Activated CD4-positive, alpha-beta memory T cell treated with anti-CD3 and anti-CD28 coated beads for 36 hours (primary cell): ENCODE measurements at regions of chr3 and their contacts with region 1.

Region 1: DNA sequence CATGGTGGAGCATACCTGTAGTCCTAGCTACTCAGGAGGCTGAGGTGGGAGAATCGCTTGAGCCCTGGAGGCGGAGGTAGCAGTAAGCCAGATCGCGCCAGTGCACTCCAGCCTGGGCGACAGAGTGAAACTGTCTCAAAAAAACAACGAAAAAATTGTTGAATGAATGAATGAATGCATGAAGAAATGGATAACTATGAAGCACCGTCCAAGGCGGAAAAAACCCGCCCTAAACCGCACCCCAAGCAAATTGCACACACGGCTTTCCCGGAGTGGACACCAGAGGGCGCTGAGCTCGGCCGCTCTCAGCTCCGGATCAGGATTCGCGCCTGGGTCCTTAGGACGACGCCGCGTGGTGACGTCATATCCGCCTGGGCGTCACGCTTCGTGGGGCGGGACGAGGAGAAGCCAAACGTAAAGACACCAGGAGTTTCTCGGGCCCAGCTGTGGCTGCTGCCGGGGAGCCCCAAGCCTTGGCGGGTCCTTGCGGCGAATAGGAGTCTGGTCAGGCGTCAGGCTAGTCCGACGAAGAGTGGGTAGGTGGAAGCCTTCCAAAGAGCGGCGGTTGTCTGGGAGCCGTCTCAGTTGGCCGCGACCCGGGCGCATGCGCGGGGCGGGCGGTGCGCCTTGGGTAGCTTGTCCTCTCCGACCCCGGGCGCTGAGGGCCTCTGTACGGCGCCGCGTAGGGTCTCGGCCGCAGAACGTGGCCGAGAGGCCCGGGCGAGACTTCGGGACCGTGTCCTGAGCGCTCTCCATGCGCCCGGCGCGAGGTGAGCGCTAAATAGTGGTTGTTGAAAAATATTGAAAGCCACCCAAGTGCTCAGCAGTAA is at the starts of genes HTD2 and RPP14:
- DNase-seq: peak; percentile 99
- H3K4me3 Mint-ChIP-seq: peak within 1 kb of the TSS; percentile 94
- H3K27ac Mint-ChIP-seq: peak within 1 kb of the TSS; percentile 98
- H3K4me1 Mint-ChIP-seq: peaks cover 32% of the 10 kb centered on the region
- H3K27me3 Mint-ChIP-seq: peaks cover 7% of the 10 kb centered on the region
- total RNA-seq, gene HTD2: 7.6 to 9.5 TPM
- total RNA-seq, gene RPP14: 14.0 to 15.4 TPM

Region 2: GRCh38 chr3:58177747-58178527 is 128.2 kb before region 1 on chr3:
- CTCF ChIA-PET with region 1: interaction called, 34 read pairs
- POLR2A ChIA-PET with region 1: no interaction called
- intact Hi-C with region 1: no loop called
- DNase-seq: peak; percentile 92
- H3K4me3 Mint-ChIP-seq: peak overlapping the region; percentile 39
- H3K27ac Mint-ChIP-seq: no peak overlapping the region
- H3K4me1 Mint-ChIP-seq: peaks cover 11% of the 10 kb centered on the region
- H3K27me3 Mint-ChIP-seq: no peaks in the 10 kb centered on the region

Region 3: GRCh38 chr3:58237238-58237940 is 68.7 kb before region 1 on chr3 and contains the start of gene ABHD6:
- CTCF ChIA-PET with region 1: interaction called, 14 read pairs
- POLR2A ChIA-PET with region 1: no interaction called
- intact Hi-C with region 1: loop called (anchors 1 kb)
- DNase-seq: peak; percentile 85
- H3K4me3 Mint-ChIP-seq: peak within 1 kb of the TSS; percentile 85
- H3K27ac Mint-ChIP-seq: peak within 1 kb of the TSS; percentile 62
- H3K4me1 Mint-ChIP-seq: peaks cover 8% of the 10 kb centered on the region
- H3K27me3 Mint-ChIP-seq: peaks cover 12% of the 10 kb centered on the region
- total RNA-seq, gene ABHD6: 3.9 to 4.1 TPM

Region 4: DNA sequence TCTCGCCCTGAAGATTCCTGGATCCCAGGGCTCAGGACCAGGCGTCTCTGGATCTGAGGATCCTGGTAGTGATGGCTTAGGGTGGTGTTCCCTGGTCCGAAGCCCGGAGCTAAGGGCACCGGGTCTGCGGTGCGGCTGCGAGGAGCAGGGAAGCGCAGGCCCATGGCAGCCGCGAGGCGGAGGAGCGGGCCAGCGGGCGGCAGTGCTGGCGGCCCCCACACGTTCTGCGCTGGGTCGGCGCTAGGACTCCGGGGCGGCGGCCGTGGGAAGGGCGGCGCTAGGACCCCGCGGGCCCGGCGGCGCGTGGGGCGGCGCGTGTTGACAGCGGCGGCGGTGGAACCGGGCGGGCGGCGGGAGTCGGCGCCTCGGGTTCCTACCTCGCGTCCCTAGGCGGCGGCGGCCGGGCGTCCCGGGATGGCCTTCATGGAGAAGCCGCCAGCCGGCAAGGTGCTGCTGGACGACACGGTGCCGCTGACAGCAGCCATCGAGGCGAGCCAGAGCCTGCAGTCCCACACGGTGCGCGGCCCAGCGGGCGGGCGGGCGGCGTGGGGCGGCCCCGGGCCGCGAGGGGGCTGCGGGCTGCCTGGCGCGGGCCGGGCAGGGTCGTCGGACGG is 26.6 kb after region 1 on chr3 and contains the start of gene PXK:
- CTCF ChIA-PET with region 1: interaction called, 43 read pairs
- POLR2A ChIA-PET with region 1: interaction called, 8 read pairs
- intact Hi-C with region 1: loop called (anchors 1 kb)
- DNase-seq: peak; percentile 86
- H3K4me3 Mint-ChIP-seq: peak within 1 kb of the TSS; percentile 99
- H3K27ac Mint-ChIP-seq: peak within 1 kb of the TSS; percentile 82
- H3K4me1 Mint-ChIP-seq: peaks cover 28% of the 10 kb centered on the region
- H3K27me3 Mint-ChIP-seq: no peaks in the 10 kb centered on the region
- total RNA-seq, gene PXK: 40.9 to 45.4 TPM

Region 5: GRCh38 chr3:58361866-58362265 is 55.8 kb after region 1 on chr3:
- CTCF ChIA-PET with region 1: no interaction called
- POLR2A ChIA-PET with region 1: no interaction called
- intact Hi-C with region 1: no loop called
- DNase-seq: no peak
- H3K4me3 Mint-ChIP-seq: no peak overlapping the region
- H3K27ac Mint-ChIP-seq: no peak overlapping the region
- H3K4me1 Mint-ChIP-seq: peaks cover 35% of the 10 kb centered on the region
- H3K27me3 Mint-ChIP-seq: no peaks in the 10 kb centered on the region

Region 6: DNA sequence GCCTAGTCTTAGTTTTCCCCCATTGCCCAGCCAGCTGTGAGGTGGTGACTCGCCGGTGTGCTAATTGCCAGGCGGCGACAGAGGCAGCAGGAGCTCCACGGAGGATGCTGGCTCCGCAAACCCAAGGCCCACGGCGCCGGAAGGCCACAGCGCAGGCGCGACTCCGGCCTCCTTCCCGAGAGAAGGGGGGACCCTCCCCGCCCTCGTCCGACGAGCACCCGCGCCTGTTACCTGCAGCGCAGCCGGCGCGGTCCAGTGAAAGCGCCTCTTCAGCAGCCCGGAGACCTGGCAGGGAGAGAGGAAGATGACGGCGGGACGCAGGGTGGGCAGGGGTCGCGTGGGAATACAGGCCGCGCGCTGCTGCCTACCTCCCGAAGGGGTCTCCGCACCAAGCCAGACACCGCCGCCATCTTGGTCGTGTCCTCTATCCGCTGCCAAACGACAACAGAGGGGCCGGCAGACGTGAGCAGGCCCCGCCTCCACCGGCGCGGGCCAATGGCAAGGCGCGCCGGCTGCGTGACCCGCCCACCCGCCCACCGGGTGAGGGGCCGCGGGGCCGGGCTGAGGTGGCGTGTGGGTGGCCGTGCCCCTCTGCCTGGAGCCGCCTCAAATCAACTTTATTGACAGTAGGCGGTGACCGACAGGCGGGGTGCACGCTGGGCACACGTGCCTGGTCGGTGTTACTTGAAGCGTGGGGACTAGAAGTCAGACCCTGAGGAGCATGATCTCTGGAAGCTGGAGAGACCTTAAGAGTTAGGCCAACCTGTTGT is 127.5 kb after region 1 on chr3 and contains the start of gene PDHB:
- CTCF ChIA-PET with region 1: interaction called, 21 read pairs
- POLR2A ChIA-PET with region 1: interaction called, 10 read pairs
- intact Hi-C with region 1: loop called (anchors 1 kb)
- DNase-seq: peak; percentile 93
- H3K4me3 Mint-ChIP-seq: peak within 1 kb of the TSS; percentile 92
- H3K27ac Mint-ChIP-seq: peak within 1 kb of the TSS; percentile 91
- H3K4me1 Mint-ChIP-seq: peaks cover 24% of the 10 kb centered on the region
- H3K27me3 Mint-ChIP-seq: no peaks in the 10 kb centered on the region
- total RNA-seq, gene PDHB: 55.6 to 56.3 TPM

Region 7: DNA sequence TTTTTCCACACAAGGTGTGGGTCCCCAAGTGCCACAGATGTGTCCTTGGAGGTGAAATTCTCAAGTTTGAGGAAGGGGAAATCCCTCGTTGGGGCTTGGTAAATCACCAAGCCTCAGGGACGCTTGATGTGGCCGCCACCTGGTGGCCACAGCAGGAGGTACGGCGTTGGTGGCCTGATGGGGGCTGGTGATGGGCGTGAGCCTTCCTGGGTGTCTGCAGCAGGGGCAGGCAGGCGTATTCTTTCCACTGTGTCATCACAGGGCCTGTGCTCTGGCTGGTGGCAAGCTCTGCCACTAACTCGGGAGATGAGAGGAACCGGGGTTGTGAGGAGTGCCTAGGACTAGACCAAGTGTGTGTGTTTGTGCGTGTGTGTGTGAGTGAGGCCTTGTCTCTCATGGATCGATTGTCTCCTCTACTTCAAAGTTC is 226.7 kb after region 1 on chr3:
- CTCF ChIA-PET with region 1: interaction called, 29 read pairs
- POLR2A ChIA-PET with region 1: no interaction called
- intact Hi-C with region 1: loop called (anchors 1 kb)
- DNase-seq: peak; percentile 91
- H3K4me3 Mint-ChIP-seq: no peak overlapping the region
- H3K27ac Mint-ChIP-seq: no peak overlapping the region
- H3K4me1 Mint-ChIP-seq: peaks cover 12% of the 10 kb centered on the region
- H3K27me3 Mint-ChIP-seq: no peaks in the 10 kb centered on the region